CD8-positive, alpha-beta memory T cell (primary cell): ENCODE measurements at regions of chr13 and their contacts with region 1.

Region 1: GRCh38 chr13:99380921-99381645 is 73.9 kb upstream of the GPR183 start:
- DNase-seq: peak; percentile 27 to 82 (median 62)
- H3K4me3 ChIP-seq: peak overlapping the region; percentile 14
- H3K4me3 Mint-ChIP-seq: peak overlapping the region; percentile 25 to 89 (median 73)
- H3K27ac ChIP-seq: peak overlapping the region; percentile 30
- H3K27ac Mint-ChIP-seq: peak overlapping the region; percentile 95 to 99 (median 98)
- H3K4me1 ChIP-seq: peaks cover 93% of the 10 kb centered on the region
- H3K4me1 Mint-ChIP-seq: peaks cover 84 to 98% (median 98%) of the 10 kb centered on the region in 3 donors
- H3K27me3 ChIP-seq: no peaks in the 10 kb centered on the region
- H3K27me3 Mint-ChIP-seq: no peaks in the 10 kb centered on the region

Region 2: GRCh38 chr13:99301913-99302636 is 79.0 kb before region 1 on chr13:
- CTCF ChIA-PET with region 1: interaction called, 15 read pairs
- POLR2A ChIA-PET with region 1: interaction called, 11 read pairs
- DNase-seq: no peak
- H3K4me3 ChIP-seq: peak overlapping the region; percentile 50
- H3K4me3 Mint-ChIP-seq: peak overlapping the region; percentile 88 to 95 (median 94)
- H3K27ac ChIP-seq: no peak overlapping the region
- H3K27ac Mint-ChIP-seq: peak overlapping the region; percentile 87 to 95 (median 92)
- H3K4me1 ChIP-seq: peaks cover 79% of the 10 kb centered on the region
- H3K4me1 Mint-ChIP-seq: peaks cover 76 to 84% (median 81%) of the 10 kb centered on the region in 3 donors
- H3K27me3 ChIP-seq: no peaks in the 10 kb centered on the region
- H3K27me3 Mint-ChIP-seq: no peaks in the 10 kb centered on the region

Region 3: GRCh38 chr13:99307648-99308339 is 73.3 kb before region 1 on chr13:
- CTCF ChIA-PET with region 1: interaction called, 15 read pairs
- POLR2A ChIA-PET with region 1: interaction called, 11 read pairs
- DNase-seq: peak in 2 of 5 donors; percentile 33 to 76
- H3K4me3 ChIP-seq: peak overlapping the region; percentile 50
- H3K4me3 Mint-ChIP-seq: peak overlapping the region; percentile 88 to 95 (median 94)
- H3K27ac ChIP-seq: peak overlapping the region; percentile 71
- H3K27ac Mint-ChIP-seq: peak overlapping the region; percentile 89 to 98 (median 94)
- H3K4me1 ChIP-seq: peaks cover 77% of the 10 kb centered on the region
- H3K4me1 Mint-ChIP-seq: peaks cover 75 to 85% (median 84%) of the 10 kb centered on the region in 3 donors
- H3K27me3 ChIP-seq: no peaks in the 10 kb centered on the region
- H3K27me3 Mint-ChIP-seq: no peaks in the 10 kb centered on the region

Region 4: DNA sequence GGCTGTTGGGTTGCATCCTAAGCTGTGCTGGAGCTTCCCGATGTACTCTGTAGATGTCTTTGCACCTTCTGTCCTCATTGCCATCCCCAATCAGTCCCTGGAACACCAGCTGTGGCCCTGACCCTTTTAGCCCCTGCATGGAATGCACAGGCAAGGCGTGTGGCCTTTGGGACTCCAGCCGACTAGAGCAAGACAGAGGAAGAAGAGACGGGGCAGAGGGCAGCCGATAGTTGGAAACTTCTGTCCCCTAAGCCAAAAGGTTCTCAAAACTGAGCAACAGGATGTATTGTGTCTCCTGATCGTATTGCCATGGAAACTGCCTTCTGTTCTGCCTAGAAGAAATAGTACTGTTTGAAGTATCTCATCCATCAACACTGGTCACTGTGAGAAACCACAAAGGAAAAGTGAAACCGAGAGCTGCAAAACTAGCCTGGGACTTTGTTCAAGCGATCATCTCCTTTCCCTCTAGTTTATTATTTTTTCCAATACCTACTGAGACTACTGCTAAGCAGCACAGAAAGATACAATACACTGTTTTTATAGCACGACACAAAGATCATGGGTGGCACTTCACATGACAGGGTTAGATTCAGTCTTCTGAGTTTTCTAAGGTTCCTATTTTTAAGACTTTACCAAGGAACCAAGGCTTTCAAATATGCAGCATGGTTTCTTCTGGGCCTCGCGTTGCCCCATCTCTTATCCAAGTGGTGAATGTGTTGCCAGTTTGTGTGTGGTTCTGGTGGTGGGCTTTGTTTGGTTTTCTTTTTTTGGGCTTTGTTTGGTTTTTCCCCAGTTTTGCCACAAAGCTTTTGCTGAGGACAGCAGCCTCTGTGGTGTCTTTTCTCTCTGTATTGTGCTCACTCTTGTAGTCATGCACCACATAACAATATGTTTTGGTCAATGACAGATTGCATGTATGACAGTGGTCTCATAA is 24.7 kb before region 1 on chr13:
- CTCF ChIA-PET with region 1: interaction called, 24 read pairs
- POLR2A ChIA-PET with region 1: interaction called, 18 read pairs
- DNase-seq: peak in 4 of 5 donors; percentile 55 to 92 (median 88)
- H3K4me3 ChIP-seq: peak overlapping the region; percentile 43
- H3K4me3 Mint-ChIP-seq: peak overlapping the region; percentile 2 to 79 (median 72)
- H3K27ac ChIP-seq: peak overlapping the region; percentile 96
- H3K27ac Mint-ChIP-seq: peak overlapping the region; percentile 96 to 100 (median 99)
- H3K4me1 ChIP-seq: peaks cover 97% of the 10 kb centered on the region
- H3K4me1 Mint-ChIP-seq: peaks cover 97 to 100% (median 100%) of the 10 kb centered on the region in 3 donors
- H3K27me3 ChIP-seq: no peaks in the 10 kb centered on the region
- H3K27me3 Mint-ChIP-seq: no peaks in the 10 kb centered on the region

Region 5: DNA sequence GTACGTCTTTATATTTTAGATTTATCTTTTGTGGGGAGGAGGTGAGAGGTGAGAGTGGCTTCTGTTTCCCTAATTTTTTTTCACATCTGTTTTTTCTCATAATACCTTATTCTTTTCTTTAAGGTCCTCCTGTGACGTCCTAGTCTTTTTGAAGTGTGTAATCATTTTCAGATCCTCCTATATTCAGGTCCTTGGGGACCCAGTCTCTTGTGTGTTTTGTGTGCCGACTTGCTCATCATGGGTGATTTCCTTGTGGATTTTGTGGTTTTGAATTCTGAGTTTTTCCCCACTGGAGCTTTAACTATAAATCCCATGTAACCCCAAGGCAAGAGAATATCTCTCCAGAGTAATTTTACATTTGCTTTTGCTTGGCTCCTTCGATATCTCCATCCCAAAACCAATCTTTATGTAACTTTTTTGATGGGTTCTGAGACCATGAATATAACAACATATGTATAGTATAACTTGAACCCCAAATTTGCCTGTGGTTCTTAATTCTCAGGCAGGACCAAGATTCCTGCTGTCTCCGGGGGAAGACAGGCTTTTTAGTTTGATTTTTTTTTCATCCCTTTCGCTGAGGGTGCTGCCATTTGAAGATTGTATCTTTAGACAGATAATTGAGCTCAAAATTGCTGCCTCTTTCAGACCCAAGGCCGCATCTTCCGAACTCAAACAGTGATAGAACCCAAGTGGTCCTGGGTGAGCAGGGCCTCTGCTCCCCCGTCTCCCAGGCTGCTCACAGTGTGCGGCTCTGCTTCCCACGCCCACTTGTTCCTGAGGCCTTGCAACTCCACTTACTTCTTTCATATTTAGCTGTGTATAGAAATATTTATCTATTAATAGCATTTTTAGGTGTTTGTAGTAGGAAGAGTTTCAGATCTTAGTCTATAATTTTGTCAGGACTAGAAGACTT is 14.8 kb before region 1 on chr13:
- CTCF ChIA-PET with region 1: interaction called, 24 read pairs
- POLR2A ChIA-PET with region 1: interaction called, 11 read pairs
- DNase-seq: no peak
- H3K4me3 ChIP-seq: peak overlapping the region; percentile 2
- H3K4me3 Mint-ChIP-seq: peak overlapping the region; percentile 31 to 89 (median 75)
- H3K27ac ChIP-seq: peak overlapping the region; percentile 44
- H3K27ac Mint-ChIP-seq: peak overlapping the region; percentile 91 to 98 (median 96)
- H3K4me1 ChIP-seq: peaks cover 94% of the 10 kb centered on the region
- H3K4me1 Mint-ChIP-seq: peaks cover 76 to 97% (median 96%) of the 10 kb centered on the region in 3 donors
- H3K27me3 ChIP-seq: no peaks in the 10 kb centered on the region
- H3K27me3 Mint-ChIP-seq: no peaks in the 10 kb centered on the region